ENCODE measurements at regions of chr9 and their contacts with region 1.

Region 1: DNA sequence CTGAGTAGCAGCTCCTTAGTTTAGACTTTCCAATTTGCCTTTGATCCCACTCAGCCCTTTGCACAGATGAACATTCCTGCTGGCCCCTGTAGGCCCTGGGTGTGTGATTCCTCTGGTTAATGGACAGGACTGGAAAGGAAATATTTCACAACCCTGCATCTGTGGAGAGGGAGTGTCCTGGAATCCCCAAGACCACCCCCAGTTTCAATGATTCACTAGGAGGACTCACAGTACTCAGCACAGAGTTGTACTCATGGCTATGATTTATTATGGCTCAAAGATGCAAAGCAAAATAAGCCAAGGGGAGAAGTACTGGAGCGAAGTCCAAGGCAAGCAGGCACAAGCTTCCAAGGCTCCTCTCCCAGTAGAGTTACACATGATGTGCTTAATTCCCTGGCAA is 42.4 kb upstream of the TJP2 start:
- DNase-seq: no peak
- ATAC-seq: peak; percentile 89
- H3K4me3 ChIP-seq: no peak overlapping the region
- H3K27ac ChIP-seq: peak overlapping the region; percentile 63 to 89
- H3K4me1 ChIP-seq: peaks cover 0 to 17% of the 10 kb centered on the region in 2 donors
- H3K27me3 ChIP-seq: no peaks in the 10 kb centered on the region

Region 2: GRCh38 chr9:69060766-69061165 is 70.9 kb before region 1 on chr9:
- intact Hi-C with region 1: loop called in 1 of 2 experiments (anchors 5 kb)
- DNase-seq: no peak
- ATAC-seq: no peak
- H3K4me3 ChIP-seq: no peak overlapping the region
- H3K27ac ChIP-seq: no peak overlapping the region
- H3K4me1 ChIP-seq: no peaks in the 10 kb centered on the region
- H3K27me3 ChIP-seq: no peaks in the 10 kb centered on the region

Region 3: DNA sequence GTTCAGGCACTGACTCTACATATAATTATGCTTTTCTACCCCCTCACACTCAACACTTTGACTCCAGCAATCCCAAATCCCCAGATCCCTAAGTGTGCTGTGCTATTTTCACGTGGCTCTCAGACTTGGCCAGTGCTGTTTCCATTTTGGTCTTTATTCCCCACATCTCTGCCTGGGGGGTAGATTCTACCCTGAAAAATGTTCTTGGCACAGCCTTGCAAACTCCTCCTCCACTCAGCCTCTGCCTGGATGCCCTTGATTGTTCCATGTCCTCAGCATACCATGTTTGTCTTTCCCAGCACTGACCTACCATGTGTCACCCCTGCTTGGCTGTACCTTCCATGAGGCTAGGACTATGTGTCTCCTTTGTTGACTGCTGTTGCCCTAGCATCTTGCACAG is 53.1 kb before region 1 on chr9:
- intact Hi-C with region 1: loop called in 1 of 2 experiments (anchors 5 kb)
- DNase-seq: peak in 1 of 2 donors; percentile 61
- ATAC-seq: peak; percentile 92
- H3K4me3 ChIP-seq: no peak overlapping the region
- H3K27ac ChIP-seq: peak overlapping the region; percentile 59 to 96
- H3K4me1 ChIP-seq: peaks cover 5 to 12% of the 10 kb centered on the region in 2 donors
- H3K27me3 ChIP-seq: no peaks in the 10 kb centered on the region

Region 4: GRCh38 chr9:69097064-69097463 is 34.6 kb before region 1 on chr9:
- intact Hi-C with region 1: loop called in 1 of 2 experiments (anchors 5 kb)
- DNase-seq: no peak
- ATAC-seq: peak; percentile 75
- H3K4me3 ChIP-seq: no peak overlapping the region
- H3K27ac ChIP-seq: peak overlapping the region; percentile 69 to 79
- H3K4me1 ChIP-seq: peaks cover 2 to 3% of the 10 kb centered on the region in 2 donors
- H3K27me3 ChIP-seq: no peaks in the 10 kb centered on the region

Region 5: GRCh38 chr9:69174616-69175463 is 43.2 kb after region 1 on chr9:
- intact Hi-C with region 1: loop called (anchors 5 kb)
- DNase-seq: peak; percentile 76 to 84
- ATAC-seq: peak; percentile 81
- H3K4me3 ChIP-seq: peak overlapping the region; percentile 31 to 40
- H3K27ac ChIP-seq: peak overlapping the region in 1 of 2 donors; percentile 38
- H3K4me1 ChIP-seq: peaks cover 0 to 8% of the 10 kb centered on the region in 2 donors
- H3K27me3 ChIP-seq: no peaks in the 10 kb centered on the region

Measured in aorta (tissue), 5 donors.